Heart left ventricle (tissue), 16 donors: ENCODE measurements at regions of chr9 and their contacts with region 1.

Region 1: GRCh38 chr9:4475301-4475700 is 15.0 kb upstream of the SLC1A1 start:
- DNase-seq: no peak
- ATAC-seq: no peak
- H3K4me3 ChIP-seq: no peak overlapping the region
- H3K27ac ChIP-seq: no peak overlapping the region
- H3K4me1 ChIP-seq: no peaks in the 10 kb centered on the region
- H3K27me3 ChIP-seq: no peaks in the 10 kb centered on the region
- CTCF ChIP-seq: no peak
- POLR2A ChIP-seq: no peak

Region 2: GRCh38 chr9:4417578-4418325 is 57.5 kb before region 1 on chr9:
- intact Hi-C with region 1: loop called in 1 of 10 experiments (anchors 10 kb)
- DNase-seq: no peak
- ATAC-seq: no peak
- H3K4me3 ChIP-seq: no peak overlapping the region
- H3K27ac ChIP-seq: no peak overlapping the region
- H3K4me1 ChIP-seq: no peaks in the 10 kb centered on the region
- H3K27me3 ChIP-seq: no peaks in the 10 kb centered on the region
- CTCF ChIP-seq: no peak
- POLR2A ChIP-seq: no peak

Region 3: DNA sequence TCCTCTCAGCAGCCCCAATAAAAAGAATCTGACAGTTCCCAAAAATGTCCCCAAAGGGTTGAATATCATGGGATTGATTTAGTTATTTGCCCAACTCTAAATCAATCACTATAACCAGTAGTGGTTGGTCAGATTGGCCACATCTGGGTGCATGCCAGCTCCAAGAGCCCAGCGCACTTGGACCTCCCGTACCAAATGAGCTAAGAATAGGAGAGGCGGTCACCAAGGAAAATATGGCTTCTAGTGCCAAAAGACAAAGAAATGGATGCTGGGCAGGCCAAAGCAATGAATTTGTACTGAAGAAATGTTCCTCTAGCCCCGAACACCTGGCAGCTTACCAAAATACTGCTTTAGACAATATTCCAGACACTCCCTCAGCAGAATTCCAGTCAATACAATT is 397.8 kb after region 1 on chr9:
- intact Hi-C with region 1: no loop called
- DNase-seq: peak in 1 of 5 donors; percentile 14
- ATAC-seq: peak in 2 of 4 donors; percentile 36 to 51
- H3K4me3 ChIP-seq: no peak overlapping the region
- H3K27ac ChIP-seq: no peak overlapping the region
- H3K4me1 ChIP-seq: peaks cover 0 to 3% (median 0%) of the 10 kb centered on the region in 12 donors
- H3K27me3 ChIP-seq: no peaks in the 10 kb centered on the region
- CTCF ChIP-seq: no peak
- POLR2A ChIP-seq: no peak

Region 4: GRCh38 chr9:5425006-5425628 is 949.8 kb after region 1 on chr9:
- intact Hi-C with region 1: no loop called
- DNase-seq: no peak
- ATAC-seq: no peak
- H3K4me3 ChIP-seq: no peak overlapping the region
- H3K27ac ChIP-seq: no peak overlapping the region
- H3K4me1 ChIP-seq: no peaks in the 10 kb centered on the region
- H3K27me3 ChIP-seq: no peaks in the 10 kb centered on the region
- CTCF ChIP-seq: peak; percentile 18 to 49 (median 36)
- POLR2A ChIP-seq: no peak